Right ventricle myocardium superior (tissue), 1 donor: ENCODE measurements at regions of chr11 and their contacts with region 1.

Region 1: GRCh38 chr11:96986516-96986915 is 596.7 kb downstream of the JRKL start:
- DNase-seq: no peak
- ATAC-seq: no peak

Region 2: GRCh38 chr11:97269527-97269926 is 283.0 kb after region 1 on chr11:
- intact Hi-C with region 1: no loop called
- DNase-seq: no peak
- ATAC-seq: no peak

Region 3: DNA sequence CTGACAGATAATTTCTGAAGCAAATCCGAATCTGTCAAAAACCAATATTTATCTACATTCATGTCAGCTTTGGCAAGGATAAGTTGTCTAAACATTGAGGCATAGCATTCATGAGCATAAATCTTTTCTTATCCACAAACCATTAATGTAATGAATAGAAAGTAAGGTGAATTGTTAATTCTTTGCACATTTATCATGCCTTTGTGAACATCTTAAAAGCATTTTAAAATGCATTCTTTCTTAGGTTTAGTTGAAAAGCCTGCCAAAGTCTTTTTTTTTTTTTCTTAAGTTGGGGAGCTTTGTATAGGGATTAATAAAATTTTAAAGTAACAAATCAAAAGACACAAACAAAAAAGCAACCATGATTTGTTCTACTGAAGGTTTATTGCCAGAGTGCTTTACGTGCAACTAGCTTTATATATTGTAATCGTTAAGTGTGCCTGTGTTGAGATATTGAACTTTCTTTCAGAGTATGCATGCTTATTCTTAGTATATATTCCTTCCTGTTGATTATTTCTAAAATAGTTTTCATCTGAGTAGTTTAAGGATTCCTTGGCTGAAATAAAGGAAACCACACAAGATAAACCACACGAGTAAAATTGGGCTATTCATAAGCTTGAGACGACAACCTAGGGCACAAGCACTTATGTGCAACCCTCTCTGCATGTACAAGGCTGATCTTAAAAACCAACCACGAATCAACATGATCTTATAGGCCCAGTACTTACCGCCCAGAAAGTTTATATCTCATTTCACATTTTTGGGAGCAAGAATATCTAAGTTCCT is 923.3 kb after region 1 on chr11:
- intact Hi-C with region 1: loop called (anchors 10 kb)
- DNase-seq: no peak
- ATAC-seq: no peak